H1 (cell line): ENCODE measurements at regions of chr22 and their contacts with region 1.

Region 1: GRCh38 chr22:25027959-25028840 is 75.7 kb downstream of the KIAA1671 start:
- DNase-seq: peak in 1 of 2 experiments; percentile 88
- H3K4me3 ChIP-seq: no peak overlapping the region
- H3K27ac ChIP-seq: no peak overlapping the region
- H3K4me1 ChIP-seq: no peaks in the 10 kb centered on the region; a peak in 1 of 7 replicates
- H3K27me3 ChIP-seq: no peaks in the 10 kb centered on the region
- CTCF ChIP-seq: peak; percentile 85 to 91 (median 85)
- EP300 ChIP-seq: no peak
- POLR2A ChIP-seq: no peak
- RAD21 ChIP-seq: peak; percentile 85 to 91

Region 2: GRCh38 chr22:24951942-24952836 is 76.0 kb before region 1 on chr22 and contains the start of gene KIAA1671:
- CTCF ChIA-PET with region 1: interaction called, 110 read pairs
- POLR2A ChIA-PET with region 1: interaction called, 4 read pairs
- DNase-seq: peak; percentile 84 to 98
- H3K4me3 ChIP-seq: peak within 1 kb of the TSS; percentile 70 to 83 (median 77)
- H3K27ac ChIP-seq: peak within 1 kb of the TSS; percentile 89
- H3K4me1 ChIP-seq: peaks cover 5 to 22% (median 8%) of the 10 kb centered on the region in 4 experiments
- H3K27me3 ChIP-seq: peaks cover 0 to 3% (median 1%) of the 10 kb centered on the region in 4 experiments; a peak in 2 of 7 replicates
- CTCF ChIP-seq: peak; percentile 95 to 99 (median 95)
- EP300 ChIP-seq: 0 out of 3 replicates have a peak, but pooled peaks of 1 of the 2 experiments have one; percentile 15
- POLR2A ChIP-seq: no peak
- RAD21 ChIP-seq: peak; percentile 92 to 94
- total RNA-seq, gene KIAA1671: 22.6 and 23.9 TPM in 2 replicates

Region 3: GRCh38 chr22:25013607-25014006 is 14.6 kb before region 1 on chr22:
- CTCF ChIA-PET with region 1: interaction called, 14 read pairs
- POLR2A ChIA-PET with region 1: interaction called, 3 read pairs
- DNase-seq: no peak
- H3K4me3 ChIP-seq: no peak overlapping the region
- H3K27ac ChIP-seq: no peak overlapping the region
- H3K4me1 ChIP-seq: peaks cover 0 to 6% (median 4%) of the 10 kb centered on the region in 4 experiments; a peak in 4 of 7 replicates
- H3K27me3 ChIP-seq: no peaks in the 10 kb centered on the region
- CTCF ChIP-seq: no peak
- EP300 ChIP-seq: no peak
- POLR2A ChIP-seq: no peak
- RAD21 ChIP-seq: no peak